Right ventricle myocardium superior (tissue), 1 donor: ENCODE measurements at regions of chr12 and their contacts with region 1.

Region 1: DNA sequence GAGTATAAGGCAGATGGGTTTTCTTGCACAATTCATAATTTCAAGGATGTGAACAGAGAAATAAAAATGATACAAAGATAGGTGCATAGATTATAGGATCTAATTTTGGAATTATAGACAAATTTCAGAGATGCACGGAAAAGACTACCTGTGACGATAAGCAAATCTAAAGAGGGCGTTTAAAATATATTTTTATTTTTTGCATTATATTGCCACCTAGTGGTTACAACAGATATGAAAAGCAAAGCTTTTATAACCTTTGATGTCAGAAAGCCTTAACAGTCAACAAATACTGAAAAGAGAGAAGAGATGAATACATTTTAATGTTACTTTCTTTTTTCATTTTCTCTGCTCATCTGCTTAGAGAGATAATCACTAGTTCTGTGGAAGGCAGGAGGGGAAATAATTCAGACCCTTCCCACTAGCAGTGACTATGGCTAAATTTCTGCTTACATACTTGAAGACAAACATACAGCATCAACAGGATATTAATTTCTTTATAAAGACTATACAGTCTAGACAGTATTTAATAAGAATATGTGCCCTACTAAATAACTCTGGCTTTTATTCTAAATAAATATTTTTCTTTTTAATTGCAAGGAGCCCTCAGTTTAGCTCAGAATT is 46.3 kb downstream of the NTS start:
- DNase-seq: no peak
- ATAC-seq: no peak

Region 2: GRCh38 chr12:85468356-85469157 is 451.9 kb before region 1 on chr12:
- intact Hi-C with region 1: loop called (anchors 5 kb)
- DNase-seq: no peak
- ATAC-seq: peak; percentile 73